Activated CD4-positive, alpha-beta T cell treated with anti-CD3 and anti-CD28 coated beads, Interleukin-2, amount 10 ng/mL, durations not matched to agents 7 days and 5 days (primary cell): ENCODE measurements at regions of chr9 and their contacts with region 1.

Region 1: GRCh38 chr9:124852829-124853531 is at the start of gene WDR38:
- DNase-seq: peak; percentile 75
- H3K4me3 Mint-ChIP-seq: peak within 1 kb of the TSS; percentile 61
- H3K27ac Mint-ChIP-seq: no peak within 1 kb of the TSS
- H3K4me1 Mint-ChIP-seq: peaks cover 11% of the 10 kb centered on the region
- H3K27me3 Mint-ChIP-seq: peaks cover 10% of the 10 kb centered on the region
- total RNA-seq, gene WDR38: not detected

Region 2: GRCh38 chr9:124450241-124450924 is 402.6 kb before region 1 on chr9 and contains the start of gene ADGRD2:
- CTCF ChIA-PET with region 1: no interaction called
- POLR2A ChIA-PET with region 1: no interaction called
- DNase-seq: no peak
- H3K4me3 Mint-ChIP-seq: no peak within 1 kb of the TSS
- H3K27ac Mint-ChIP-seq: no peak within 1 kb of the TSS
- H3K4me1 Mint-ChIP-seq: no peaks in the 10 kb centered on the region
- H3K27me3 Mint-ChIP-seq: peaks cover 32% of the 10 kb centered on the region
- total RNA-seq, gene ADGRD2: not detected

Region 3: DNA sequence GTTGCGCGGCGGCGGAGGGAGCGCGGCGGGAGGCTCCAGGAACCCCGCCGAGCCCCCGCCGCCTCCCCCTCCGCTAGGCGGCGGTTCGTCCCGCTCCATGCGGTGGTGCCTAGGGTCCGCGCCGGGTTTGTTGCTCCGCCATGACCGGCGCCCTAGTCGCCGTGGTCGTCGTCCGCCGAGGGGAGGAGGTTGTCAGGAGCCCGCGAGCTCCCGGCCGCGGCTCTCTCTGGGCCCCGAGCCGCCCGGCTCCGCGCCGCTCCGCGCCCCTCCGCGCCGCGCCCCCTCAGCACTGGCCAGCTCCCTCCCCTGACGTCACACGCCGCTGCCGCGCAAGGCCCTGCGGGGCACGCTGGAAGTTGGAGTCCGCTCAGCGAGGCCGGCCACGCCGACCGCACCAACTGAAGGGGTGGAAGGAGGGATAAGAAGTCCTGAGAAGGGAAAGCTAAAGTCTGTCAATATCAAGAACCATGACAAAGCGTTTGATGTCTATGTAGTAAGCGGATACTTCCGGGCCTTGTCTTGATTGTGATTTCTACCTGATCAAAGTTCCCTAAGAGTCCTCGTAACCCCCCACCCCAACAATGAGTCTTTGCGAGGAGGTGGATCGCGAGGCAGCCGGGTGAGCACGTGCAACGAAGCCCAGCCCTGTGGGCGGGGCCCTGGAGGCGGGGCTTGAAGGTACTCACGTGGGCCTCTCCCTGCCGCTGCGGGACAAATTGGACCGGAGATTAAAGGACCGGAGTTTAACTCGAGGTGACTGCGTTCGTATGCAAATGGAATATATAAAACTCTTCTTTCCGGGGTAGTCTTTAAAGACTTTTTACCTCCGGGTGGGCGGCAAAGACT is 81.7 kb before region 1 on chr9 and contains the start of gene NR6A1:
- CTCF ChIA-PET with region 1: interaction called, 173 read pairs
- POLR2A ChIA-PET with region 1: no interaction called
- DNase-seq: peak; percentile 95
- H3K4me3 Mint-ChIP-seq: peak within 1 kb of the TSS; percentile 78
- H3K27ac Mint-ChIP-seq: peak within 1 kb of the TSS; percentile 91
- H3K4me1 Mint-ChIP-seq: peaks cover 44% of the 10 kb centered on the region
- H3K27me3 Mint-ChIP-seq: peaks cover 66% of the 10 kb centered on the region
- total RNA-seq, gene NR6A1: 0.10 to 0.19 TPM

Region 4: GRCh38 chr9:124779362-124780059 is 73.5 kb before region 1 on chr9:
- CTCF ChIA-PET with region 1: interaction called, 173 read pairs
- POLR2A ChIA-PET with region 1: no interaction called
- DNase-seq: no peak
- H3K4me3 Mint-ChIP-seq: no peak overlapping the region
- H3K27ac Mint-ChIP-seq: no peak overlapping the region
- H3K4me1 Mint-ChIP-seq: peaks cover 7% of the 10 kb centered on the region
- H3K27me3 Mint-ChIP-seq: peaks cover 32% of the 10 kb centered on the region

Region 5: DNA sequence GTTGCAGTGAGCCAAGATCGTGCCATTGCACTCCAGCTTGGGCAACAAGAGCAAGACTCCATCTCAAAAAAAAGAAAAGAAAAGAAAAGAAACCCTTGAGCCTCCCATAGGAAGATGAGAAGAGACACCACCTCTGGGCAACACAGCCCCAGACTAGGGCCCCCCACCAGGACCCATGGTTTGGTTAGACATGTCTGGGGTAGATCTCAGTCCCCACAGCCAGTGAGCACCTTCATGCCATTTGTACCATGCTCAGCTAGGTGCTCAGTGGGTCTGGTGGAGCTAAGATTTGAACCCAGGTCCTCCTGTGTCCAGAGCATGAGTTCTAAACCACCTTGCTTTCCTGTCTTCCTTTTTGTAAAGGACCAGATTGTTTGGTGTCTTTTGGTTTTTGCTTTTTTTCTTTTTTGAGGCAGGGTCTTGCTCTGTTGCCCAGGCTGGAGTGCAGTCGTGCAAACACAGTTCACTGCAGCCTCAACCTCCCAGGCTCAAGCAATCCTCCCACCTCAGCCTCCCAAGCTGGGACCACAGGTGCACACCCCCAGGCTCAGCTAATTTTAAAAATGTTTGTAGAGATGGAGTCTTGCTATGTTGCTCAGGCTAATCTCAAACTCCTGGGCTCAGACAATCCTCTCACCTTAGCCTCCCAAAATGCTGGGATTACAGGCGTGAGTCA is 64.3 kb before region 1 on chr9:
- CTCF ChIA-PET with region 1: interaction called, 15 read pairs
- POLR2A ChIA-PET with region 1: no interaction called
- DNase-seq: no peak
- H3K4me3 Mint-ChIP-seq: no peak overlapping the region
- H3K27ac Mint-ChIP-seq: no peak overlapping the region
- H3K4me1 Mint-ChIP-seq: no peaks in the 10 kb centered on the region
- H3K27me3 Mint-ChIP-seq: peaks cover 8% of the 10 kb centered on the region

Region 6: DNA sequence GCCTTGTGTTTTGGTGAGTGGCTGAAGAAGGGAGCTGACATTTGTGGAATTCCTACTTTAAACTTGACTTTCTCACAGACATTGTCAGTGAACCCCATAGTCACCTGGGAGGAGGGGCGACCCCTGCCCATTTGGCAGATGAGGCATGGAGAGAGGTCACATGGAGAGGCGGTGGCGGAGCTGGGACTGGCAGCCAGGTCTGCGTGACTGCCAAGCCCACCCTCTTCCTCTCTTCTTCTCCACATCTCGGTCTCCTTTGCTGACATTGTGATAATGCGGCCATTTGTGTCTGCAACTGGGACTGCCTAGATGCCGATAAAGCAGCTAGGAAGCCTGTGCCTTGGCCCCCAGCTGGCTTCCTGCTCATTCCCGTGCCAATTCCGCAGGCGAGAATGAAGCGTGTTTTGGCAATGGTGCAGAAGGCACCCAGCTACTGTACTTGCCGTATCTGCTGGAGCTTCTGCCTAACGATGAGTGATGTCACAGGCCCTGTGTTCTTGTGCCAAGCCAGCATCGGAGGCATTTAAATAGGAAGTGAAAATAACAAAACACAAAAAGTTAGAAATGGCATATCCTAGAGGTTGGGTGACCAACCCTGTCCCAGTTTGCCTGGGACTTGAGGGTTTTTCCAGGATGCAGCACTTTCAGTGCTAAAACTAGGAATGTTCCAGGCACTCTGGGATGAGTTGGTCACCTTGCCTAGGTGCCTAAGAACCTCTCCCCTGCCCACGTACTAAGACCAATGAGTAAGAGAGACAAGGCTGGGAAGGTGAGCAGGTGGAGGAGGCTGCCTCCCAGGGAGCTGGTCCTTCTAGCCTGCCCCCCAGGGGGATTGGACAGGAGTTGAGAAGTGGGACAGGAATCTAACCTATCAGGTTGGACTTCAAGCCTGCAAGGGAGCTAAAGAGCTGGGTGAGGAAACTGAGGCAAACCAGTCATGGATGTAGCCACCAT is 52.4 kb before region 1 on chr9:
- CTCF ChIA-PET with region 1: interaction called, 15 read pairs
- POLR2A ChIA-PET with region 1: no interaction called
- DNase-seq: no peak
- H3K4me3 Mint-ChIP-seq: no peak overlapping the region
- H3K27ac Mint-ChIP-seq: no peak overlapping the region
- H3K4me1 Mint-ChIP-seq: no peaks in the 10 kb centered on the region
- H3K27me3 Mint-ChIP-seq: peaks cover 2% of the 10 kb centered on the region

Region 7: DNA sequence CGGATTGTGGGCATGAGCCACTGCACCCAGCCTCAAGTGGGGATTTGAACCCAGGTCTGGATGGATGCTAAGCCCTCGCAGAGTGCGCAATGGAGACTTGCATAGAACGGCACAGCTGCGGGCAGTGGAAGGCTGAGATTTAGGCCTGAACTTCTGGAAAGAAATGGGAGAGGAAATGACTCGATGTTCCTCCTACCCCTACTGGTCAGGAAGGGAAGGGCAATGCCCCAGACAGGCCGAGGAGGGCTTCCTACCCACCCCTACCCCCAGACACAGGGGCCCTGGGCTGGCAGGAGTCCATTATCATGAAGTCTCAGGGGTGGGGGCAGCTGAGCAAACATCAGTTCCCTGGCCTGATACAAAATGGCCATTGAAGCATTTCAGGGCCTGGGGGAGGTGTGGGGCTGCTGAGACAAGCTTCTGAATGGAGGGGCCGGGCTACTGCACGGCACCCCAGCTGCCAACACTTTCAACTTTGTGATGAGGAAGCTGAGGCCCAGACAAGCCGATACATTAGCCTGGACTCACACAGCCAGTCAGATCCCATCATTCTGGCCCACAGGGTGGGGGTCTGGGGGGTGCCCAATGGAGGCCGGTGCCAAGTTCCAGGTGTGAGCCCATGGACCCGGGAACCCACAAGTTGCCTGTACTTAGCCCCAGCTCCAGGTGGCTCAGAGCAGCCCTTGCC is 13.2 kb before region 1 on chr9:
- CTCF ChIA-PET with region 1: interaction called, 26 read pairs
- POLR2A ChIA-PET with region 1: no interaction called
- DNase-seq: no peak
- H3K4me3 Mint-ChIP-seq: no peak overlapping the region
- H3K27ac Mint-ChIP-seq: no peak overlapping the region
- H3K4me1 Mint-ChIP-seq: no peaks in the 10 kb centered on the region
- H3K27me3 Mint-ChIP-seq: peaks cover 13% of the 10 kb centered on the region

Region 8: GRCh38 chr9:124868511-124869465 is 15.8 kb after region 1 on chr9:
- CTCF ChIA-PET with region 1: interaction called, 11 read pairs
- POLR2A ChIA-PET with region 1: no interaction called
- DNase-seq: peak; percentile 89
- H3K4me3 Mint-ChIP-seq: peak overlapping the region; percentile 90
- H3K27ac Mint-ChIP-seq: peak overlapping the region; percentile 98
- H3K4me1 Mint-ChIP-seq: peaks cover 51% of the 10 kb centered on the region
- H3K27me3 Mint-ChIP-seq: no peaks in the 10 kb centered on the region